ENCODE measurements at regions of chr21 and their contacts with region 1.

Region 1: DNA sequence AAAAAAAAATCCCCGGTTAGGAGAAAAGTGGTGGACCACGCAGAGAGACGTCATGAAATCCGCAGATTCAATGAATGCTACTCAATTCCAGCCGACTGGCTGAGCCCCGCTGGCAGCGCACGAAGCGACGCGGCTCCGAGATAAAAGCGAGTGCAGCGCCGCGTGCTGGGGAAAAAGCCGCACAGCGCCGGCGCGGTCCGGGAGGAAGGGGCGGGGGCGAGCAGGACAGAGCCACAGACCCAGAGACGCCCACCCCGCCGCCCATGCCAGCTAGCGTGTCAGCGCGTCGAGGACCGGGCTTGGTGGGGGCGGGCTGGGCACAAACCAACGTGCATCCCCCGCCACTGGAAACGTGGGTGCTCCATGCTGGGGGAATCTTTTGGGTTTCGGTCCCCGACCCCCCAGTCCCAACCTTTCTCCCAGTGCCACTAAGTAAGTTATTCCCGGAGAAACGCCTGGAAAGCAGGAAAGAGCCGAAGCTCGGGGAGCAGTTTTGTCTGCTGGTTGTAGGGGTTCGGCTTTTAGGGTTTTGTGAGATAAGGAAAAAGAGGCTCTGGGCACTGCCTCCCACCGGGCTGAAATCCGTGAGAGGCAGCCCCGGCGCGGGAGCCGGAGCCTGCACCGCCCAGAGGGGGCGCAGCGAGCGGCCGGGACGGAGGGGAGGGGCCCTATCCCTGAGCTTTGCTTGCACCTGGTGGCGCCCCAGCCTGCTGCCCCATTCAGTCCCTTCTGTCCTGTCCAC is at the start of gene KCNJ6:
- DNase-seq: peak in 4 of 6 donors; percentile 9 to 86 (median 38)
- ATAC-seq: peak; percentile 69 to 90 (median 88)
- H3K4me3 ChIP-seq: peak within 1 kb of the TSS in 2 of 4 donors; percentile 4 to 28
- H3K27ac ChIP-seq: no peak within 1 kb of the TSS
- H3K4me1 ChIP-seq: peaks cover 0 to 3% (median 0%) of the 10 kb centered on the region in 3 donors
- H3K27me3 ChIP-seq: peaks cover 6 to 55% (median 11%) of the 10 kb centered on the region in 4 donors
- CTCF ChIP-seq: peak; percentile 13 to 40 (median 32)
- total RNA-seq, gene KCNJ6: 0.28 to 1.4 (median 0.55) TPM

Region 2: DNA sequence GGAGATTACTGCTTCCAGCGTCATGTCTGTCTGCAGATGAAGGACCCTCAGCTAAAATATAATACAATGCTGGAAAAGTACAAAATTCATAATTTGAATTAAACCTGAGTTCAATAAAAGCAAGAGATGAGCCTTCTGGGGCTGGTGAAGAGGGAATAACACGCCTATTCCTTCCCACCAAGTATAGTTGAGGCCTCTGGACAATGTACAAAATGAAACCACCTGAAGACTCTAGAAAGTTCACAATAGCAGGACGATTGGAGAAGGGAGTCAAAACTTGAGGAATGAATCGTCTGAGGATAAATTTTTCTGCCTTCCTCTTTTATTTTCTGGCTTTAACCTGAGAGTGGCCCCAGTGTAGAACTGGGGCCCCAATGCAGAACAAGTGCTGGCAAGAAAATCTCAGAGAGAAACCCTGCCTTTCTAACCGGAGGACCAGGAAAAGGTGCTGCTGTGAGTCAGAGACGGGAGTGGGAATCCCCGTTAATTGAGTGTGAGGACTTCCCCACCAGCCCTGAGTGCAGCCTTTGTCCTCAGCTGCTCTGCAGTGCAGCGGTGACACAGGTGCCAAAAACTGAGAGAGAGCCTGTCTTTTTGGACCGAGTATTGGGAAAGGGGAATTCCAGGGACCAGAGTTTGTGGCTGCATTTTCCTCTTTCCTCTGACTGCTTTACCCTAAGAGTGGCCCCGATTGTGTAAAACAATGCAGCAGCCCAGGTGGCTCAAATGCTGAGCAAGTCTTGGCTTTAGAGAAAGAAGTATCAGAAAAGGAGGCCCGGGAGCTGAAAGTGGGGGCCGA is 285.0 kb before region 1 on chr21:
- intact Hi-C with region 1: no loop called
- DNase-seq: peak in 3 of 6 donors; percentile 40 to 54 (median 45)
- ATAC-seq: peak; percentile 58 to 96 (median 90)
- H3K4me3 ChIP-seq: no peak overlapping the region
- H3K27ac ChIP-seq: peak overlapping the region in 2 of 4 donors; percentile 35 to 66
- H3K4me1 ChIP-seq: peaks cover 0 to 3% (median 0%) of the 10 kb centered on the region in 3 donors
- H3K27me3 ChIP-seq: no peaks in the 10 kb centered on the region
- CTCF ChIP-seq: no peak

Region 3: DNA sequence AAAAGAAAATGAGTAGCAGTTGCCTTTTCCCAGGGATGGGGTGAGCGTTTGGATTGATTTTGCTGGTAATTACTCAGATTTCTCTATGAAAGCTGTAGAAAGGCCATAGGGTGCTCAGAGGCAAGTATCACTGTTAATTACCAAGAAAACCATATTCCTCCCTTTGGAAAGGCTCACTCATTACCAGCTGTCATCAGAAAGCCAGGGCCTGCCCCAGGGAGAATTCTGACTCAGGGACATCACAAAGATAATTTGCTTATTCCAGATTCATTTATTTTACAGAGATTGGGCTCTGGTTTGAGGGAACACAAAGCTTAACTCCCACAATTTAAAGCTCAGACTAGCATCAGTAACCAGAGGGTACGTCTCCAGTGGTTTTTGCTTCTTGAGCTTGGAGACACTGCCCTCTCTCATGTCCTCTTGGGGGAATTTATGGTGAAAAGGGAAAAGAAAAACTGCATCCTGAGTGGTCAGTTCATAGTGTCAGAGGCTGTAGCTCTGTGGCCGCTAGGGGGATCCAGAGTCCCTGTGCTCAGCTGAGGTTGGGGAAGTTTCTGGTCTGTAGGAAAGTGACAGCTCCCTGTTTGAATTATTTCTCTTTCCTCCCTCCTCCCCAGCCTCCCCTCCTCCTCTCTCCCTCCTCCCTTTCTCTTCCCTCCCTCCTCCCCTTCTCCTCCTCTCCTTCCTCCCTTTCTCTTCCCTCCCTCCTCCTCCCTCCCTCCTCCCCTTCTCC is 204.5 kb before region 1 on chr21:
- intact Hi-C with region 1: loop called in 1 of 3 experiments (anchors 10 kb)
- DNase-seq: peak in 5 of 6 donors; percentile 39 to 79 (median 57)
- ATAC-seq: peak; percentile 61 to 95 (median 95)
- H3K4me3 ChIP-seq: no peak overlapping the region
- H3K27ac ChIP-seq: no peak overlapping the region
- H3K4me1 ChIP-seq: no peaks in the 10 kb centered on the region
- H3K27me3 ChIP-seq: peaks cover 0 to 3% (median 0%) of the 10 kb centered on the region in 4 donors
- CTCF ChIP-seq: peak; percentile 68 to 84 (median 74)

Region 4: GRCh38 chr21:38196036-38196435 is 279.6 kb after region 1 on chr21:
- intact Hi-C with region 1: no loop called
- DNase-seq: no peak
- ATAC-seq: no peak
- H3K4me3 ChIP-seq: no peak overlapping the region
- H3K27ac ChIP-seq: no peak overlapping the region
- H3K4me1 ChIP-seq: no peaks in the 10 kb centered on the region
- H3K27me3 ChIP-seq: no peaks in the 10 kb centered on the region
- CTCF ChIP-seq: no peak